Dorsolateral prefrontal cortex (tissue), 120 donors: ENCODE measurements at regions of chr3 and their contacts with region 1.

Region 1: GRCh38 chr3:121914081-121914998 is 20.1 kb downstream of the SLC15A2 start:
- DNase-seq: no peak
- H3K4me3 ChIP-seq: peak overlapping the region in 13 of 59 donors; percentile 2 to 32 (median 10)
- H3K27ac ChIP-seq: peak overlapping the region in 42 of 59 donors; percentile 4 to 79 (median 52)
- H3K27me3 ChIP-seq: no peaks in the 10 kb centered on the region
- CTCF ChIP-seq: no peak

Region 2: GRCh38 chr3:121718205-121718846 is 196.0 kb before region 1 on chr3:
- intact Hi-C with region 1: no loop called
- DNase-seq: no peak
- H3K4me3 ChIP-seq: no peak overlapping the region
- H3K27ac ChIP-seq: no peak overlapping the region
- H3K27me3 ChIP-seq: no peaks in the 10 kb centered on the region
- CTCF ChIP-seq: no peak

Region 3: DNA sequence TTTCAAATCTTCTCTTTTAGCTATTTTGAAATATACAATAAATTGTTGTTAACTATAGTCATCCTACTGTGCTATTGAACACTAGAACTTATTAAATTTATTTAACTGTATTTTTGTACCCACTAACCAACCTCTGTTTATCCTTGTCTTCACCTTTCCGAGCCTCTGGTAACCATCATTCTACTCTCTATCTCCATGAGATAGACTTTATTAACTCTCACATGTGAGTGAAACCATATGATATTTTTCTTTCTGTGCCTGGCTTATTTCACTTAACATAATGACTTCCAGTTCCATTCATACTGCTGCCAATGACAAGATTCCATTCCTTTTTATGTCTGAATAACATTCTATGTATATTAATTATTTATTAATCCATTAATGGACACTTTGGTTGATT is 35.9 kb before region 1 on chr3:
- intact Hi-C with region 1: no loop called
- DNase-seq: no peak
- H3K4me3 ChIP-seq: no peak overlapping the region
- H3K27ac ChIP-seq: no peak overlapping the region
- H3K27me3 ChIP-seq: no peaks in the 10 kb centered on the region
- CTCF ChIP-seq: no peak

Region 4: DNA sequence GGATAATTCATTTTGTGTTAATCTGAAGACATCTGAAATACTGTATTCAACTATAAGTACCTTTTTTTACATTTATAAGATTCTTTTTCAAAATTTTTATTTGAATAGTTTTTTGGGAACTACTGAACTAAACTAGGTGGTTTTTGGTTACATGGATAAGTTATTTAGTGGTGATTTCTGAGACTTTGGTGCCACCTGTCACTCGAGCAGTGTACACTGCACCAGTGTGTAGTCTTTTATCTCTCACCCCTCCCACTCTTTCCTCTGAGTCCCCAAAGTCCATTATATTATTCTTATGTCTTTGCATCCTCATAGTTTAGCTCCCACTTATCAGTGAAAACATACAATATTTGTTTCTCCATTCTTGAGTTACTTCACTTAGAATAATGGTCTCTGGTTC is 198.4 kb after region 1 on chr3:
- intact Hi-C with region 1: loop called in 1 of 2 experiments (anchors 5 kb)
- DNase-seq: no peak
- H3K4me3 ChIP-seq: no peak overlapping the region
- H3K27ac ChIP-seq: no peak overlapping the region
- H3K27me3 ChIP-seq: peaks cover 0 to 9% (median 0%) of the 10 kb centered on the region in 45 donors
- CTCF ChIP-seq: no peak